Mammary epithelial cell (primary cell): ENCODE measurements at regions of chr12 and their contacts with region 1.

Region 1: DNA sequence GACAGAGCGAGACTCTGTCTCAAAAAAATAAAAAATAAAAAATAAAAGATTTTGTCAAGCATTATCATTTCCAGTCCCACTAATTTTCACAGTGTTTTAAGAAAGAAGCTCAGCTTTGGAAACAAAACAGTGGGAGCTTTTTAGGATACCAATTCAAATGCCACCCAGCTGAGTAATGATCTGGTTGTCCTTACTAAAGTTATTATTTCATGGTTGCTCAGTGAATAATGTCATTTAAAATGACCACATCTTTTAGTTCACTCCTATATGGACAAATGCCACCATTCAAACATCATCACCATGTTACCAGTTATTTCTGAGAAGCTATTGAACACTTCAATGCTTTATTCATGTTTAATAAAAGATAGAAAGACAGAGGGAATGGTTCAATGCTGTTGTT is 365.0 kb downstream of the CCER1 start:
- DNase-seq: no peak
- H3K4me3 ChIP-seq: no peak overlapping the region
- H3K27ac ChIP-seq: no peak overlapping the region
- H3K4me1 ChIP-seq: no peaks in the 10 kb centered on the region
- H3K27me3 ChIP-seq: no peaks in the 10 kb centered on the region
- CTCF ChIP-seq: no peak

Region 2: GRCh38 chr12:90174198-90174510 is 415.8 kb before region 1 on chr12:
- CTCF ChIA-PET with region 1: no interaction called
- dilution Hi-C with region 1: no loop called
- in situ Hi-C with region 1: no loop called
- intact Hi-C with region 1: loop called (anchors 10 kb)
- DNase-seq: peak; percentile 16
- H3K4me3 ChIP-seq: no peak overlapping the region
- H3K27ac ChIP-seq: no peak overlapping the region
- H3K4me1 ChIP-seq: no peaks in the 10 kb centered on the region
- H3K27me3 ChIP-seq: no peaks in the 10 kb centered on the region
- CTCF ChIP-seq: no peak

Region 3: GRCh38 chr12:90627180-90627896 is 37.4 kb after region 1 on chr12:
- CTCF ChIA-PET with region 1: no interaction called
- dilution Hi-C with region 1: no loop called
- in situ Hi-C with region 1: no loop called
- intact Hi-C with region 1: no loop called
- DNase-seq: peak; percentile 44
- H3K4me3 ChIP-seq: no peak overlapping the region
- H3K27ac ChIP-seq: no peak overlapping the region
- H3K4me1 ChIP-seq: peaks cover 13% of the 10 kb centered on the region
- H3K27me3 ChIP-seq: no peaks in the 10 kb centered on the region
- CTCF ChIP-seq: no peak

Region 4: DNA sequence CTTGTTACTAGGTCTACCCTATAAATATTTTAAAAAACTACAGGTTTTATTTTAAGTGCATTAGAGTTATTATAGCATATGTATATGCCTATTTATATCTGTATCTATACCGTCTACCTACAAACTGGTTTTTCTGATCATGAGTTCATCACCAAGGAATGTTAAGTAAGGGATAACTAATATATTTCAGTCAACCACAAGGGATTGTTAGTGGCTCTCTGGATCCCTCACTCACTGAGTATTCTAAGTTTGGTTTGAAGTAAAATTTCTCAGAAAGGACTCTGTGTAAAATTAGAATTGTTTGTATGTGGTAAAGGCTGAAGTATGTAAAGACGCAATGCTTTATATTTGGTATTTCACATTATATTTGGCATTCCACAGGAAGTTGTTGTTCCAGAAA is 410.0 kb after region 1 on chr12:
- CTCF ChIA-PET with region 1: no interaction called
- dilution Hi-C with region 1: no loop called
- in situ Hi-C with region 1: no loop called
- intact Hi-C with region 1: no loop called
- DNase-seq: peak; percentile 28
- H3K4me3 ChIP-seq: no peak overlapping the region
- H3K27ac ChIP-seq: no peak overlapping the region
- H3K4me1 ChIP-seq: no peaks in the 10 kb centered on the region
- H3K27me3 ChIP-seq: peaks cover 9% of the 10 kb centered on the region
- CTCF ChIP-seq: no peak